Activated B cell treated with CpG ODN at 0.5 μM for 24 hours (primary cell): ENCODE measurements at regions of chr1 and their contacts with region 1.

Region 1: DNA sequence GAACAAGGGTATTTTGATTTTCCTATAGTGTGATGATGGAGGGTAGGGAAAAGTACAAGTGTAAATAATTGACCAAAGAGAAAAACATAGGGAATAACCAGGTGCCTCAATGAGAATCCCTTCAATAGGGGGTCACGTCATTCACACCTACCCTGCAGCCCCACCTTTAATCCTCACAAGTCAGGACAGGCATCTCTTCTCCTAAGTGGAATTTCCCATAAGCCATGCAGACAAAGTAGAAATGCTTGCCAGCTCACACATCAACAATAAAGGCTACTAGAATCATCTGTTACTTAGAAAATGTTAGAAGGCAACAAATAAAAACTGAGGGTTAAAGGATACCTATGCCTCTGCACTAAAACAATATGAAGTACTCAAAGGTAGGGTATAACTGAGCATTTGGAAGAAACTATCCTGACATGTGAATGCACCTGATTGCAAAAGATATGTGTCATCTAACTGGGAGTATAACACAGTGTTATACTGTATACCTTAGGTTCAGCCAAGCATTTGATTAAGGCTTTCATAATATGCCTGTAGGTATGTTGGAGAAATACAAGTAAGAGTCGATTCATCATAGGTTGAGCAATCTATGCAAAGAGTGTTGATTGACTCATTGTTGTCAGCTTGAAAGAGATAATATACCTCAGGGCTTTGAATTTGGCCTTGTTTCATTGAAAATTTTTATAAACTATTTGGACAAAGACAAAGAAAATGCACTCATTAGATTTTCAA is 32.4 kb upstream of the ATP1A1 start:
- DNase-seq: no peak
- ATAC-seq: no peak
- H3K4me3 Mint-ChIP-seq: no peak overlapping the region
- H3K27ac Mint-ChIP-seq: no peak overlapping the region
- H3K4me1 Mint-ChIP-seq: no peaks in the 10 kb centered on the region
- H3K27me3 Mint-ChIP-seq: peaks cover 22% of the 10 kb centered on the region
- CTCF ChIP-seq: no peak

Region 2: DNA sequence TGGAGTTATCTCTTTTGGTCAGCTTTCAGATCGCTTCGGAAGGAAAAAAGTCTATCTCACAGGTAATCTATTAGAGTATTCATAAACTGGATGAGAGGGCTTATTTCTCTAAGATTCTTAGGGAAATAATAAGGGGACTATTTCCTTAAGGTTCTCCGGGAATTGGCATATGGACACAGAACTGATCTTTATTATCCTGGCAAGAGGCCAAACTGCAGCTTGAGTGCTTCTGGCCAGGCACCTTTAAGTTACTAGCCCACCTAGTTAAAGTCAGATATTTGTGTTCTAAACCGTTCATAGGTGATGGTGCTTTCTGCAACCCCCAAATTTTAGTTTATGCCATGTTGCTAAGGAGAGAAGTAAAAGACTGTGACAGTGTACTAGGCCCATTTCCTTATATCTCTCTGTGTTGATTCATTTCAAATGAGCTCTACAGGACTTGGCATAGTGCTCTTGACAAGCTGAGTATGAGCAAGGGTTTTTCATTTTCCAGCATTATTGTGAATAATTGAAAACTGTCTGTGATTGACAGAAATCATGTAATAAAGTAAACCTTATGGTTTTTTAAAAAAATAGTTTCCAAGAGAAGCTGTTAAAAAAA is 320.9 kb before region 1 on chr1:
- CTCF ChIA-PET with region 1: no interaction called
- POLR2A ChIA-PET with region 1: no interaction called
- intact Hi-C with region 1: no loop called
- DNase-seq: no peak
- ATAC-seq: no peak
- H3K4me3 Mint-ChIP-seq: no peak overlapping the region
- H3K27ac Mint-ChIP-seq: no peak overlapping the region
- H3K4me1 Mint-ChIP-seq: no peaks in the 10 kb centered on the region
- H3K27me3 Mint-ChIP-seq: no peaks in the 10 kb centered on the region
- CTCF ChIP-seq: no peak

Region 3: GRCh38 chr1:116309089-116309870 is 31.4 kb before region 1 on chr1:
- CTCF ChIA-PET with region 1: no interaction called
- POLR2A ChIA-PET with region 1: no interaction called
- intact Hi-C with region 1: loop called (anchors 1 kb)
- DNase-seq: no peak
- ATAC-seq: no peak
- H3K4me3 Mint-ChIP-seq: no peak overlapping the region
- H3K27ac Mint-ChIP-seq: no peak overlapping the region
- H3K4me1 Mint-ChIP-seq: no peaks in the 10 kb centered on the region
- H3K27me3 Mint-ChIP-seq: peaks cover 2% of the 10 kb centered on the region
- CTCF ChIP-seq: no peak

Region 4: DNA sequence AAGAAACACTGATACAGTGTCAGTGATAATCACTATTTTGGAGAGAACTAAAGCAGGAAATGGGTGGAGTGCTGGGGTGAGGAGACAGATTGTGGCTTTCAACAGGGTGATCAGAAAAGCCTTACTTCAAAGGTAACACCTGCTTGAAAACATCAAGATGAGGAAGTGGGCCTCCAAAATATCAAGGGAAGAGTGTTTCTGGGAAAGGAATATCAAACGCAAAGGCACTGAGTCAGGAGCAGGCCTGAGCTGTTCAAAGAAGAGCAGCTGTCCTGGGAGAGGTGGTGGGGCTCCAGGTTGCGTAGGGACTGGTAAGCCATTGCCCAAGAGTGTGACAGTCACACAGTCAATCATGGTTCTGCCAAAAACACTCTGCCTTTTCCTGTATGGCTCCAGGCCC is 14.8 kb before region 1 on chr1:
- CTCF ChIA-PET with region 1: no interaction called
- POLR2A ChIA-PET with region 1: no interaction called
- intact Hi-C with region 1: no loop called
- DNase-seq: no peak
- ATAC-seq: no peak
- H3K4me3 Mint-ChIP-seq: peak overlapping the region; percentile 30
- H3K27ac Mint-ChIP-seq: peak overlapping the region; percentile 77
- H3K4me1 Mint-ChIP-seq: peaks cover 31% of the 10 kb centered on the region
- H3K27me3 Mint-ChIP-seq: no peaks in the 10 kb centered on the region
- CTCF ChIP-seq: no peak